Ovary (tissue), 10 donors: ENCODE measurements at regions of chr16 and their contacts with region 1.

Region 1: GRCh38 chr16:55760310-55761001 is 72.4 kb downstream of the CES1 start:
- DNase-seq: peak in 2 of 5 donors; percentile 23 to 57
- H3K4me3 ChIP-seq: no peak overlapping the region
- H3K27ac ChIP-seq: no peak overlapping the region
- H3K4me1 ChIP-seq: no peaks in the 10 kb centered on the region
- H3K27me3 ChIP-seq: no peaks in the 10 kb centered on the region
- CTCF ChIP-seq: no peak
- EP300 ChIP-seq: no peak
- POLR2A ChIP-seq: no peak

Region 2: DNA sequence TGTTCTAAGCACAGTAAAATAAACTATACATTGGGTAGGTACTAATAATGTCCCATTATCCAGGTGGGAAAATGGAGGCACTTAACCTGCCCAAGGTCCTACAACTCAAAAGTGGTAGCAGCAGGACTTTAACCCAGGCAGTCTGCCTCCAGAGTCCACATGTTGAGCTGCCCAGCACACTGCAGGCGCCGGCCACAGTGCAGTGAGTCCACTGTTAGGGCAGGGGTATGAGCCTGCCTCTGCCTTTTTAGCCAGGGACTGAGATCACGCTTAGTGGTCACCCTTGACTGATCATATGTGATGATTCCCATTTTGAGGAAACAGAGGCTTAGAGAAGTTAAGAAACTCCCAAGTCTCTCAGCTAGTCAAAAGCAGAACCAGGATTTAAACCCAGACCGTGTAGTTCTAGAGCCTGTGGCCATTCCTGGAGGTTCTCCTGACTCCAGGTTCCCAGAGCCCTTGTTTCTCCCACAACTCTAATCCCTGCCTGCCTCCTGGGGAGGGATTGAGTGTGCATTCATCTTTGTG is 64.1 kb after region 1 on chr16:
- intact Hi-C with region 1: loop called in 1 of 4 experiments (anchors 10 kb)
- DNase-seq: no peak
- H3K4me3 ChIP-seq: no peak overlapping the region
- H3K27ac ChIP-seq: no peak overlapping the region
- H3K4me1 ChIP-seq: no peaks in the 10 kb centered on the region
- H3K27me3 ChIP-seq: no peaks in the 10 kb centered on the region
- CTCF ChIP-seq: no peak
- EP300 ChIP-seq: no peak
- POLR2A ChIP-seq: no peak

Region 3: DNA sequence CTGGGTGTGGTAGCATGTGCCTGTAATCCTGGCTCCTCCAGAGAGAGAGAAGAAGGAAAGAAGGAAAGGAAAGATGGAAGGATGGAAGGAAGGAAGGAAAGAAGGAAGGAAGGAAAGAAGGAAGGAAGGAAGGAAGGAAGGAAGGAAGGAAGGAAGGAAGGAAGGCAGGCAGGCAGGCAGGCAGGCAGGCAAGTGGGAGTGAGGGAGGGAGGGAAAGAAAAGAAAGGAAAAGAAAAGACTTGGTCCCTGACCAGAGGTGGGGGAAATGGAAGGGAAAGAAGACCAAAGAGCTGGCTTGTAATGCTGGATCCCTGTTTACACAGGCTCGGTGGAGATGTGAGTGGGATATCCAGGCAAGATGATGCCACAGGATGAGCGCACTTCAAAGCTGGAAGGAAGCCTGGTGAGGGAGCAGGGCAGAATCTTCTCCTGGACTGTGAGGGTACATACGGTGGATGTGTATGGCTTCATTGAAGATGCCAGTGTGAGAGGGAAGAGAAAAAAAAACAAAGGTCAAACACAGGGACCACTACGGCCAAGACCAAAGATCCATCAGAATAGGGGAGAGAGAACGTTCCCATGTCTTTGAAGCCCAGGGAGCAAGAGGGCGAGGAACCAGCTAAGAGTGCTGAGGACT is 70.3 kb after region 1 on chr16:
- intact Hi-C with region 1: loop called in 2 of 4 experiments (anchors 2 to 10 kb)
- DNase-seq: no peak
- H3K4me3 ChIP-seq: no peak overlapping the region
- H3K27ac ChIP-seq: no peak overlapping the region
- H3K4me1 ChIP-seq: no peaks in the 10 kb centered on the region
- H3K27me3 ChIP-seq: no peaks in the 10 kb centered on the region
- CTCF ChIP-seq: no peak
- EP300 ChIP-seq: no peak
- POLR2A ChIP-seq: no peak

Region 4: GRCh38 chr16:55949518-55949917 is 189.1 kb after region 1 on chr16:
- intact Hi-C with region 1: no loop called
- DNase-seq: no peak
- H3K4me3 ChIP-seq: no peak overlapping the region
- H3K27ac ChIP-seq: no peak overlapping the region
- H3K4me1 ChIP-seq: no peaks in the 10 kb centered on the region
- H3K27me3 ChIP-seq: no peaks in the 10 kb centered on the region
- CTCF ChIP-seq: no peak
- EP300 ChIP-seq: no peak
- POLR2A ChIP-seq: no peak

Region 5: DNA sequence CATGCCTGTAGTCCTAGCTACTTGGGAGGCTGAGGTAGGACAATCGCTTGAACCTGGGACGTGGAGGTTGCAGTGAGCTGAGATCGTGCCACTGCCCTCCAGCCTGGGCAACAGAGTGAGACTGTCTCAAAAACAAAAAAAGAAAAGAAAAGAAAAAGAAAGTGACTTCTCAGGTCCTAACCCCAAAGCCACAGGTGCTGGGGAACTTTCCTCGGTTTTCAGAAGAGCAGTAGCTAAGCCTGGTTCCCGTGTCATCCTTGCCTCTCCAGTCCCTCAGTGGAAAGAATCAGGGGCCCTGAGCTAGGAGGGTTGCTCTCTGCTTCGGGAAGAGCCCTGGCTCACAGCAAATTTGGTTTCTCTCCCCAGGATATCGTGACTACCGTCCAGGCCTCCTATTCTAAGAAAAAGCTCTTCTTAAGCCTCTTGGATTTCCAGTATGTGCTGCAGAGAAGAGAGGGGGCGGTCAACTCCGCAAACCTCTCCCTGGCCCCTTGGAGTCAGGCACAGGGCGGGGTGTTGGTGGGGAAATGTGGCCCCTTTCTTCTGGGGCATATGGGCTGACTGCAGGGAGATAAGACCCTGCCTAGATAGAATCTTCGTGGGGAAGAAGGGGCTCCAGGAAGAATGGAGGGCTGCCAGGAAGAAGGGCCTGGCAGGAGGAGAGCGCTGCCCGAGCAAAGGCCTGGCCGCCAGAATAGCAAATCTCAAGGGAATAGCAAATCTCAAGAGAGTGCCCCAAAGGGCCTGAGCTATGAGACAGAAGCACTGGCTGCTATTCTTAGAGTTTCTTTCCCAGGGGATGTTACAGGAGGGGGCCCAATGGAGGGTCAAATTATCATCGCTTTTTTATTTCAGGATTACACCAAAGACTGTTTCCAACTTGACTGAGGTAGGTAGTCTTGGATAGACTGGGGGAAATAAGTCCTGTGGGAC is 1220.6 kb after region 1 on chr16:
- intact Hi-C with region 1: no loop called
- DNase-seq: no peak
- H3K4me3 ChIP-seq: no peak overlapping the region
- H3K27ac ChIP-seq: no peak overlapping the region
- H3K4me1 ChIP-seq: peaks cover 2% of the 10 kb centered on the region
- H3K27me3 ChIP-seq: no peaks in the 10 kb centered on the region
- CTCF ChIP-seq: no peak
- EP300 ChIP-seq: no peak
- POLR2A ChIP-seq: no peak